HEK293 (cell line): ENCODE measurements at regions of chr10 and their contacts with region 1.

Region 1: GRCh38 chr10:95183271-95184230 is 10.5 kb upstream of the ACSM6 start:
- H3K4me3 ChIP-seq: peak overlapping the region; percentile 64
- H3K27ac ChIP-seq: peak overlapping the region; percentile 68; the same call in 1 of the 2 replicates
- H3K4me1 ChIP-seq: no peaks in the 10 kb centered on the region
- CTCF ChIP-seq: peak; percentile 98

Region 2: GRCh38 chr10:95241533-95241932 is 58.0 kb after region 1 on chr10:
- CTCF ChIA-PET with region 1: interaction called, 13 read pairs
- POLR2A ChIA-PET with region 1: no interaction called
- H3K4me3 ChIP-seq: no peak overlapping the region
- H3K27ac ChIP-seq: no peak overlapping the region
- H3K4me1 ChIP-seq: no peaks in the 10 kb centered on the region
- CTCF ChIP-seq: no peak

Region 3: DNA sequence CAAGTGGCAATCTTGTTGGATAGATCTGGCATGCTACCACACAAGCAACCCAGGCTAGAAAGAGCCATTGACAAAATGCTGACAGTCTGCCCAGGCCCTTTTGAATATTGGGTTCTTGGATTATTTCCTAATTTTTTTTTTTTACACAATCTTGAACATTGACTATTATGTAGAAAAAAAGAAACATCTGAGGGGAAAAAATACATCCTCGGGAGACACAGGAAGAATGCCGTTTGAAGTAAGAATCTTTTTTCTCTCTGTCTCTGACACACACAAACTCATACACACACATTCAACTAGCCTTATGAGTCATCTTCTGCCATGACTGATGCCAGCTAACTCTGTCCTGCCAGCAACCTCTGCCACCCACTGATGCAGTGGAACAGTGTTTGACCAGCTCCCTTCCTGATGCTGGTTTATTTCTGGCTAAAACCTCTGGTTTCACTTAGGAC is 330.4 kb after region 1 on chr10:
- CTCF ChIA-PET with region 1: no interaction called
- POLR2A ChIA-PET with region 1: no interaction called
- H3K4me3 ChIP-seq: no peak overlapping the region
- H3K27ac ChIP-seq: no peak overlapping the region
- H3K4me1 ChIP-seq: no peaks in the 10 kb centered on the region; the same call in 1 of the 2 replicates
- CTCF ChIP-seq: no peak